IMR-90 (cell line): ENCODE measurements at regions of chr9 and their contacts with region 1.

Region 1: GRCh38 chr9:91949946-91950664 is at the start of gene ROR2:
- DNase-seq: peak; percentile 63
- ATAC-seq: peak; percentile 79
- H3K4me3 ChIP-seq: peak within 1 kb of the TSS; percentile 71
- H3K27ac ChIP-seq: peak within 1 kb of the TSS; percentile 76
- H3K4me1 ChIP-seq: peaks cover 17% of the 10 kb centered on the region
- H3K27me3 ChIP-seq: no peaks in the 10 kb centered on the region; the same call in 1 of the 2 replicates
- CTCF ChIP-seq: peak; percentile 78
- POLR2A ChIP-seq: no peak
- RAD21 ChIP-seq: peak; percentile 64
- total RNA-seq, gene ROR2: 2.2 and 2.3 TPM in 2 replicates

Region 2: GRCh38 chr9:91758491-91758981 is 191.6 kb before region 1 on chr9:
- CTCF ChIA-PET with region 1: interaction called, 5 read pairs
- POLR2A ChIA-PET with region 1: no interaction called
- dilution Hi-C with region 1: no loop called
- in situ Hi-C with region 1: no loop called
- intact Hi-C with region 1: loop called (anchors 5 kb)
- DNase-seq: peak; percentile 58
- ATAC-seq: peak; percentile 95
- H3K4me3 ChIP-seq: no peak overlapping the region
- H3K27ac ChIP-seq: no peak overlapping the region
- H3K4me1 ChIP-seq: no peaks in the 10 kb centered on the region; the same call in 1 of the 2 replicates
- H3K27me3 ChIP-seq: no peaks in the 10 kb centered on the region; the same call in 1 of the 2 replicates
- CTCF ChIP-seq: peak; percentile 68
- POLR2A ChIP-seq: no peak
- RAD21 ChIP-seq: peak; percentile 76

Region 3: GRCh38 chr9:91817493-91818224 is 132.4 kb before region 1 on chr9:
- CTCF ChIA-PET with region 1: no interaction called
- POLR2A ChIA-PET with region 1: no interaction called
- dilution Hi-C with region 1: no loop called
- in situ Hi-C with region 1: no loop called
- intact Hi-C with region 1: loop called (anchors 5 kb)
- DNase-seq: peak; percentile 95
- ATAC-seq: peak; percentile 82
- H3K4me3 ChIP-seq: no peak overlapping the region; the same call in 1 of the 2 replicates
- H3K27ac ChIP-seq: peak overlapping the region; percentile 85
- H3K4me1 ChIP-seq: peaks cover 41% of the 10 kb centered on the region
- H3K27me3 ChIP-seq: peaks cover 13% of the 10 kb centered on the region; the same call in 1 of the 2 replicates
- CTCF ChIP-seq: no peak
- POLR2A ChIP-seq: no peak
- RAD21 ChIP-seq: no peak; the same call in 1 of the 2 replicates

Region 4: DNA sequence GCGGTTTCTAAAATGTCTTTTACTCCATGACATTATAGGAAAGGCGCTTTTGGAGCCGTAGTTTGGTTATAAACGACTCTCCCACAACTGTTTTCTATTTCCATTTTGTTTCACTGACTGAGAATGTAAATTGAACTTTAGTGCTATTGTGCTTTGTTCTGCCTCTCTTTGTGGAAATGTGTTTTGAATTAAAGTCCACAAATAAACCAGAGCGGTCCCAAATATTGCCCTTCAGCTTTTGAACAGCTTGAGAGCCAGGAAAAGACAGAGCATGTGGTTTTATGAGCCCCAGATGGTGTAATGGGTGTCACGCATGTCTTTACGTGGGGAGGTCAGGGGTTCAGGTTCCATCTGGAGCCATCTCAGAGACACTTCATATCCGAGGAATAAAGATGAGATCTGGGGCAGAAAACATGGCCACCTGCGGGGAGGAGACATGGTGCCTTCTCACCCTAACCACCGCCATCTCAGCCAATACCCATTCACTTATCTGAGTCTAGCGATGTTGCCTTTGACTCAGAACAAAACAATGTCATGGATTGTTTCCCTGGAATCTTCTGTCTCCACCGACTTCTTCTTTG is 42.4 kb after region 1 on chr9:
- CTCF ChIA-PET with region 1: no interaction called
- POLR2A ChIA-PET with region 1: no interaction called
- dilution Hi-C with region 1: no loop called
- in situ Hi-C with region 1: no loop called
- intact Hi-C with region 1: no loop called
- DNase-seq: peak; percentile 48
- ATAC-seq: peak; percentile 27
- H3K4me3 ChIP-seq: no peak overlapping the region
- H3K27ac ChIP-seq: peak overlapping the region; percentile 13; the same call in 1 of the 2 replicates
- H3K4me1 ChIP-seq: peaks cover 2% of the 10 kb centered on the region; the same call in 1 of the 2 replicates
- H3K27me3 ChIP-seq: peaks cover 16% of the 10 kb centered on the region
- CTCF ChIP-seq: no peak
- POLR2A ChIP-seq: no peak
- RAD21 ChIP-seq: no peak

Region 5: DNA sequence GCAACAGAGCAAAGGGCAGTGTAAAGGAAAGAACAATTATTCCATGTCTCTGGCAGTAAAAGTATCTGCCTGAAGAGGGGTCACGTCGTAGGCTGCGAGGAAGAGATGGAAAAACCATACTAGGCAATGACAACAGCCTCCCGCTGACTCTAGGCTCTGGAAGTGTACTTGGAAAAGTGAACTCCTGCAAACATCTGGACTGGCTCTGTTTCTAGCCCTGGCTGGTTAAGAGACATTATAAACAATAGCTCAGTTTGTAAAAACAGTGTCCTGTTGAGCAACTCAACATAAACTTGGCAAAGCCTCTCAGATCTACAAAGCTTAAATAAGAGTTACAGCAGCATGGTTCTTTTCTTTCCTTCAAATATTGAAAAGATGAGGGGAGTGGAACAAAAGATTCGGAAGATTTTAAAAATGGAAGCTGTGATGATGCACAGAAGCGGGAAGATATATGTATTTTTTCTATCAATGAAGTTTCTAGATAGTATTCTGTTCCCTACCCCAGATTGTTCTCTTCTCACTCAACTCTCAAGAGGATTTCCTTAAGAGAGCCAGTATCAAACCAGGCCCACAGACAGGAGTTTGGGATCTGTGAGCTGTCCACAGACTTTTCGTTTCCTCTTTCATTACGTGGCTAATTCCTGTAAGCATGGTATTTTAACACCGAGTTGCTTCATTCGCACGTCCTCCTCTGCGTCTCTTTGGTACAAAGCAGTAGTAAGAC is 85.7 kb after region 1 on chr9:
- CTCF ChIA-PET with region 1: interaction called, 3 read pairs
- POLR2A ChIA-PET with region 1: no interaction called
- dilution Hi-C with region 1: no loop called
- in situ Hi-C with region 1: no loop called
- intact Hi-C with region 1: loop called (anchors 1 kb)
- DNase-seq: peak; percentile 94
- ATAC-seq: peak; percentile 91
- H3K4me3 ChIP-seq: no peak overlapping the region
- H3K27ac ChIP-seq: peak overlapping the region; percentile 99
- H3K4me1 ChIP-seq: peaks cover 25% of the 10 kb centered on the region
- H3K27me3 ChIP-seq: no peaks in the 10 kb centered on the region
- CTCF ChIP-seq: no peak
- POLR2A ChIP-seq: no peak
- RAD21 ChIP-seq: no peak

Region 6: DNA sequence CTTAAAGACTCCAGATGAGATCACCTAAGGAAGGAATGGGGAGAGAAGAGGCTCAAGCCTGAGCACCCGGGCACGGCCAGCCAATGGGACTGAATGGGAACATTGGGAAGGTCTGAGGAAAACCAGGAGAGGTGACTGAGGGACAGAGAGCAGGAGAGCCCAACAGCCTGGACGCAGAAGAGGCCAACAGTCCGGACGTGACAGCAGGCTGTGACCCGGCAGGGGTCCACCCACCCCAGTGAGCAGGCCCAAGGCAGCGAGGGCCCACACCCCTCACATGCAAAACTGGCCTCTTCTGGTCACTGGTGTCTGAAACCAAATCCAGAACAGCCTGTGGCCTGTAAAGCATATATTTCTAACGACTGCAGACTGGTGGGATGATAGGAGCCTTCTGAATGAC is 172.7 kb after region 1 on chr9:
- CTCF ChIA-PET with region 1: no interaction called
- POLR2A ChIA-PET with region 1: no interaction called
- dilution Hi-C with region 1: no loop called
- in situ Hi-C with region 1: no loop called
- intact Hi-C with region 1: no loop called
- DNase-seq: no peak
- ATAC-seq: peak; percentile 13
- H3K4me3 ChIP-seq: no peak overlapping the region
- H3K27ac ChIP-seq: peak overlapping the region; percentile 61; the same call in 1 of the 2 replicates
- H3K4me1 ChIP-seq: peaks cover 8% of the 10 kb centered on the region
- H3K27me3 ChIP-seq: no peaks in the 10 kb centered on the region
- CTCF ChIP-seq: no peak
- POLR2A ChIP-seq: no peak
- RAD21 ChIP-seq: no peak

Region 7: DNA sequence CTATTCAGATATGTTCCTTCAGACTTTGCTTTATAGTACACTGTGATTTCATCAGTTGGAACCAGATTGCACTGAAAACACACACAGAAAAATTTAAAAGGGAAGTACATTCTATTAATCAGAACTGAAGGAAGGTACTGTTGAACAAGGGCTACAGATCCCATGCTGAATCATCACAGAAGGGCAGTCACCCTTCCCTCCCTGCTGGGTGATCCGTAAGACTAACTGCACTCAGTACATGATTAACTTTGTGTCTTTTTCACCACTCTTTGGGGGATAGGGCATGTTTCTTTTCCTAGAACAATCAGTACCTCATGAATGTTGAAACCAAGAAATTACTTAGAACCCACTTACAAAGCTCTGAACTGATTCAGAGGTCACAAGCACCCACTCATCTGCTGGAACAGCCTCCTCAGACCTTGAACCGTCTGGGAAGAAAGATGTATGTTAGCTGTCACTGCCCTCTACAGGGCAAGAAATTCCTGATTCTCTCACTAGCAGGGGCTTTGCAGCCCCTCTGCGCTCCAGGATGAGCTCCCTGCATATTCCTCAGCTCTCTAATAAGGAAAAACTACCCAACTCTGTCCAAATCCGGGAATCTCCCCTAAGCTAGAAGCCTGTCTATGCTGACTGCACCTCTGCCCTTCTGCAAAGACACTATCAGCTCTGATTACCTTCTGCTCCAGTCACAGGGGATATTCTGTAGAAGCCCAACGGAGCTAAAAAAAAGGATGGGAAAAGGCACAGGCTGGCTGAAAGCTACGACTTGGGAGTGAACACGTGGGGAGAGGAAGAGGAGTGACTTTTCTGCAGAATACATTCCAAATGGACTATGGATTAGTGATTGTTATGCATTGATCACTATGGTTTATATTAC is 292.4 kb after region 1 on chr9:
- CTCF ChIA-PET with region 1: no interaction called
- POLR2A ChIA-PET with region 1: no interaction called
- dilution Hi-C with region 1: no loop called
- in situ Hi-C with region 1: no loop called
- intact Hi-C with region 1: loop called (anchors 5 kb)
- DNase-seq: peak; percentile 87
- ATAC-seq: peak; percentile 45
- H3K4me3 ChIP-seq: no peak overlapping the region
- H3K27ac ChIP-seq: peak overlapping the region; percentile 99
- H3K4me1 ChIP-seq: peaks cover 36% of the 10 kb centered on the region
- H3K27me3 ChIP-seq: no peaks in the 10 kb centered on the region
- CTCF ChIP-seq: peak; percentile 56
- POLR2A ChIP-seq: peak; percentile 31; the same call in 1 of the 2 replicates
- RAD21 ChIP-seq: peak; percentile 56